CD8-positive, alpha-beta T cell (primary cell): ENCODE measurements at regions of chr1 and their contacts with region 1.

Region 1: GRCh38 chr1:46132529-46133180 is at the start of gene PIK3R3:
- DNase-seq: peak; percentile 54 to 96 (median 80)
- ATAC-seq: peak; percentile 85
- H3K4me3 ChIP-seq: peak within 1 kb of the TSS; percentile 75 to 91
- H3K4me3 Mint-ChIP-seq: peak within 1 kb of the TSS; percentile 97
- H3K27ac ChIP-seq: peak within 1 kb of the TSS; percentile 49 to 94
- H3K27ac Mint-ChIP-seq: peak within 1 kb of the TSS; percentile 93
- H3K4me1 ChIP-seq: peaks cover 7% of the 10 kb centered on the region
- H3K4me1 Mint-ChIP-seq: peaks cover 24% of the 10 kb centered on the region
- H3K27me3 ChIP-seq: peaks cover 0 to 6% of the 10 kb centered on the region in 2 experiments
- H3K27me3 Mint-ChIP-seq: peaks cover 39% of the 10 kb centered on the region
- CTCF ChIP-seq: no peak
- total RNA-seq, gene PIK3R3: 0.71 to 0.94 TPM

Region 2: GRCh38 chr1:45686317-45687013 is 446.2 kb before region 1 on chr1 and contains the start of gene GPBP1L1:
- CTCF ChIA-PET with region 1: no interaction called
- POLR2A ChIA-PET with region 1: no interaction called
- intact Hi-C with region 1: loop called in 1 of 2 experiments (anchors 5 kb)
- DNase-seq: peak; percentile 95 to 98 (median 98)
- ATAC-seq: peak; percentile 72
- H3K4me3 ChIP-seq: peak within 1 kb of the TSS; percentile 99
- H3K4me3 Mint-ChIP-seq: peak within 1 kb of the TSS; percentile 97
- H3K27ac ChIP-seq: peak within 1 kb of the TSS; percentile 84 to 92
- H3K27ac Mint-ChIP-seq: peak within 1 kb of the TSS; percentile 100
- H3K4me1 ChIP-seq: peaks cover 39% of the 10 kb centered on the region
- H3K4me1 Mint-ChIP-seq: peaks cover 59% of the 10 kb centered on the region
- H3K27me3 ChIP-seq: no peaks in the 10 kb centered on the region
- H3K27me3 Mint-ChIP-seq: no peaks in the 10 kb centered on the region
- CTCF ChIP-seq: no peak
- total RNA-seq, gene GPBP1L1: 125 to 128 TPM

Region 3: GRCh38 chr1:46065405-46065804 is 67.2 kb before region 1 on chr1:
- CTCF ChIA-PET with region 1: no interaction called
- POLR2A ChIA-PET with region 1: no interaction called
- intact Hi-C with region 1: loop called in 1 of 2 experiments (anchors 5 kb)
- DNase-seq: peak in 2 of 9 experiments; percentile 46 to 67
- ATAC-seq: peak; percentile 88
- H3K4me3 ChIP-seq: no peak overlapping the region
- H3K4me3 Mint-ChIP-seq: peak overlapping the region; percentile 69
- H3K27ac ChIP-seq: peak overlapping the region in 1 of 2 experiments; percentile 39
- H3K27ac Mint-ChIP-seq: peak overlapping the region; percentile 81
- H3K4me1 ChIP-seq: peaks cover 13% of the 10 kb centered on the region
- H3K4me1 Mint-ChIP-seq: peaks cover 19% of the 10 kb centered on the region
- H3K27me3 ChIP-seq: no peaks in the 10 kb centered on the region
- H3K27me3 Mint-ChIP-seq: no peaks in the 10 kb centered on the region
- CTCF ChIP-seq: no peak

Region 4: DNA sequence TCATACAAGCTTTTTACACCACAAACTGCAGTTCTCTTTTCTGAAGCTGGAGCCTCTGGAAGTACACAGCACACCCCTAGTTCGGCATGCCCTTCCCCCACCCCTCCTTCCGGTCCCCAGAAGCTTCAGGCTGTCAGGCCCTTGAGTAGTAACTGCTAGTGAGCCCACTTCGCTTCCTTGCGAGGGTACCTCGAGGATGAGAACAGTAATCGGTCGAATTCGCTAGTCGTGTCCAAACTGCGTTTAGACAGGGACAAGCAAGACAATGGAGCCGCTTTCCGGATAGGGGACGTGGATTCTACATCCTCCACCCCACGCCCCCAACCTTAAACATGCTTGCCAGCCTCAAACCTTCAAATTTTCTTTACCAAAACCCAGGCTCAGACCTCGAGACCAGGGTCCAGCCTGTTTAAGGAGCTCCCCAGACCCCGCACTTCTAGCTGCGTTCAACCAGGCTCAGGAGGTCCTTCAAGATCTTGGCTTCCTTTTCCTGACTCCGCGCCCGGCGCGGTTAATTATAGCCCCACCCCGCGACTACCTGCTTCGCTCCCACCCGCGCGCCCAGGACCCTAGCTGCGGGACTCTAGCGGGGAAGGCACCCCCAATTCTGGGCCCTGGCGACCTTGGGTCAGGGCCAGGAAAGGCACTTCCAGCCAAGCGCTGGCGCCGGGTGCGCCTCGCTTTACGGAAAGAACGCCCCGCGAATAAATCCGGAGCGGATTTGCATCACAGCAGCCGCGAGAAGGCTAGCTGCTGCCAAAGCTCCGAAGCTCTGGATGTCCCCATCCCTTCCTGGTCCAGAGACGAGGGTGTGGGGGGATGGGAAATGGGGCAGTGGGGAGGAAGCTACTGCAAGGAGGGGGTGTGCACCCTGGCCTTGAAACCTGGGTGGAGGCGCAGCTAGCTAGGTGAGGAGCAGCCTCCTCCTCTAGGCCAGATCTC is 34.1 kb after region 1 on chr1:
- CTCF ChIA-PET with region 1: no interaction called
- POLR2A ChIA-PET with region 1: interaction called, 9 read pairs
- intact Hi-C with region 1: loop called in 1 of 2 experiments (anchors 1 kb)
- DNase-seq: peak in 8 of 9 experiments; percentile 35 to 78 (median 50)
- ATAC-seq: peak; percentile 79
- H3K4me3 ChIP-seq: peak overlapping the region; percentile 57
- H3K4me3 Mint-ChIP-seq: peak overlapping the region; percentile 89
- H3K27ac ChIP-seq: peak overlapping the region; percentile 57 to 69
- H3K27ac Mint-ChIP-seq: peak overlapping the region; percentile 93
- H3K4me1 ChIP-seq: peaks cover 13% of the 10 kb centered on the region
- H3K4me1 Mint-ChIP-seq: peaks cover 16% of the 10 kb centered on the region
- H3K27me3 ChIP-seq: no peaks in the 10 kb centered on the region
- H3K27me3 Mint-ChIP-seq: peaks cover 2% of the 10 kb centered on the region
- CTCF ChIP-seq: no peak

Region 5: DNA sequence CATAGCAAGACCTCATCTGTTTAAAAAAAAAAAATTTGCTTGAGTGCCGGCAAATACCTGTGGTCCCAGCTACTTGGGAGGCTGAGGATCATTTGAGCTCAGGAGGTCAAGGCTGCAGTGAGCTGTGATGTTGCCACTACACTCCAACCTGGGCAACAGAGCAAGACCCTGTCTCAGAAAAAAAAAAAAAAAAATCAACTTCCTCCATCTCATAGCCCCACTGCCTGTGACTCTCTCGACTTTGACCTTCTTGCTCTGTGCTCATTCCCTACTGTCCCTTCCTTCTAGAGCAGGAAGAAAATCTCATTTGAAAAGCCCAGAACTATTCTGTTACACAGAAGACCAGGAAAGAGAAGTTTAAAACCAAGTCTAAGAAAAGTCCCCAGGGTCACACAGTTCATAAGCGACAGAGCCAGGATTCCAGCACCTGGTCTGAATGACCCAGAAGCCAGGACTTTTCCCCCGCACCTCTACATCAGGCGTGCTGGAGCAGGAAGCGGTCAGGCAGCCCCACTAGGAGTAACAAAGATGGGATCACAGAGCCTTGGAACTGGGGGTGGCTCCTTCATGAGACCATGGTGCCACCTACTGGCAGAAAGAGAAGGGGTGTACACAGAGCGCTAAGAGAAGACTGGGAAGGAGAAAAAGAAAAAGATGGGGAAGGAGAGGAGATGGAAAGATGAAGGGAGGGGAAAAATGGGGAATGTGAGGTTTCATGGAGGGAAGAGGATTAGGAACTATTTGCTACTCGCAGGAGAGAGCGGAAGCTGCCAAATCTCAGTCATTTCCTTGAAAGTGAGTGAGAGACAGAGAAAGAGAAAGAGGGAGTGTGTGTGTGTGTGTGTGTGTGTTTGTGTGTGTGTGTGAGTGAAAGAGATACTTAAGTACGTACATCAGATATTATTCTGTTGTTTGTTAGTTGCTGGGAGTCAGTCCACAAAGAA is 46.8 kb after region 1 on chr1:
- CTCF ChIA-PET with region 1: interaction called, 13 read pairs
- POLR2A ChIA-PET with region 1: no interaction called
- intact Hi-C with region 1: no loop called
- DNase-seq: peak; percentile 27 to 82 (median 68)
- ATAC-seq: peak; percentile 84
- H3K4me3 ChIP-seq: no peak overlapping the region
- H3K4me3 Mint-ChIP-seq: no peak overlapping the region
- H3K27ac ChIP-seq: no peak overlapping the region
- H3K27ac Mint-ChIP-seq: no peak overlapping the region
- H3K4me1 ChIP-seq: peaks cover 1% of the 10 kb centered on the region
- H3K4me1 Mint-ChIP-seq: peaks cover 5% of the 10 kb centered on the region
- H3K27me3 ChIP-seq: peaks cover 0 to 2% of the 10 kb centered on the region in 2 experiments
- H3K27me3 Mint-ChIP-seq: no peaks in the 10 kb centered on the region
- CTCF ChIP-seq: peak; percentile 94

Region 6: DNA sequence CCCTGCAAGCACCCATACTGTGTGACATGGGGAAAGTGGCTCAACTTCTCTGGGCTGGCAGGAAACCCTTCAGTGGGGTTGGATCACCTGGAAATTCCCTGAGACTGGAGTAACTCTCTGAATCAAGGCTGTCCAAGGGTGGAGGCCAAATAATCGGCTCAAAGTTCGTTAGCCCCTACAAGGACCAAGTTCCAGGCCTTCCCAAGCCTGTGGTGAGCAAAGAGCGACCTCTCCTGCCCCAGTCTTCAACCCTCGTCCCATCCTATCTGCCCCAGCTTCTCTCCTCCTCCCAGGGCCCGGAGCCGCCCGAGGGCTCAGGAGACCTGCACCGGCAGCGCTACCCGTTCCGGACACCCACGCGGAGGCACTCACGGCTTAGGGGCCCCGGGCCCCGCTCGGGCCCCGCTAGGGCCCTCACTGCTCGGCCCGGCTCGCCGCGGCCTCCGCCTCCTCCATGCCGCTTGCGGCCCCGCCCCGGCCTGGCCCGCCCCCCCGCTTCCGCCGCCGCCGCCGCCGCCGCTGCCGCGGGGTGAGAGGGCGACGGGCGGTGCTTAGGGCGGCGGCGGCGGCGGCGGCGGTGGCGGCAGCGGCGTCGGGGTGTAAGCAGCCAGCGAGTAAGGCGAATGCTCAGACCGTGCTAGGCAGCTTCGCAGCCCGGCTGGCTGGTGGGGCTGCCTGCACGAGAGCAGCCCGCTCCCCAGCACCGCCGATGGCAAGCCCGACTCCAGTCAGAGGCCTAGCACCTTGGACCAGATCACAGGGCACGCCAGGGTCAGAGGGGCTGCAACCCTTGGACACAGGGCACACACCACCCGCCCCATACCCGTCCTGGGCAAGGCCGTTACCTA is 65.5 kb after region 1 on chr1 and contains the start of gene POMGNT1:
- CTCF ChIA-PET with region 1: no interaction called
- POLR2A ChIA-PET with region 1: no interaction called
- intact Hi-C with region 1: loop called (anchors 1 to 2 kb)
- DNase-seq: peak; percentile 50 to 86 (median 72)
- ATAC-seq: peak; percentile 93
- H3K4me3 ChIP-seq: peak within 1 kb of the TSS; percentile 75 to 93
- H3K4me3 Mint-ChIP-seq: peak within 1 kb of the TSS; percentile 83
- H3K27ac ChIP-seq: peak within 1 kb of the TSS; percentile 58 to 59
- H3K27ac Mint-ChIP-seq: peak within 1 kb of the TSS; percentile 88
- H3K4me1 ChIP-seq: peaks cover 20% of the 10 kb centered on the region
- H3K4me1 Mint-ChIP-seq: peaks cover 32% of the 10 kb centered on the region
- H3K27me3 ChIP-seq: peaks cover 0 to 3% of the 10 kb centered on the region in 2 experiments
- H3K27me3 Mint-ChIP-seq: no peaks in the 10 kb centered on the region
- CTCF ChIP-seq: no peak
- total RNA-seq, gene POMGNT1: 20.3 to 23.4 TPM

Region 7: GRCh38 chr1:46211051-46211450 is 78.4 kb after region 1 on chr1:
- CTCF ChIA-PET with region 1: no interaction called
- POLR2A ChIA-PET with region 1: no interaction called
- intact Hi-C with region 1: no loop called
- DNase-seq: no peak
- ATAC-seq: no peak
- H3K4me3 ChIP-seq: no peak overlapping the region
- H3K4me3 Mint-ChIP-seq: no peak overlapping the region
- H3K27ac ChIP-seq: no peak overlapping the region
- H3K27ac Mint-ChIP-seq: no peak overlapping the region
- H3K4me1 ChIP-seq: no peaks in the 10 kb centered on the region
- H3K4me1 Mint-ChIP-seq: no peaks in the 10 kb centered on the region
- H3K27me3 ChIP-seq: peaks cover 0 to 2% of the 10 kb centered on the region in 2 experiments
- H3K27me3 Mint-ChIP-seq: no peaks in the 10 kb centered on the region
- CTCF ChIP-seq: no peak

Region 8: GRCh38 chr1:46446646-46447498 is 314.2 kb after region 1 on chr1:
- CTCF ChIA-PET with region 1: no interaction called
- POLR2A ChIA-PET with region 1: no interaction called
- intact Hi-C with region 1: no loop called
- DNase-seq: peak; percentile 50 to 82 (median 73)
- ATAC-seq: peak; percentile 58
- H3K4me3 ChIP-seq: no peak overlapping the region
- H3K4me3 Mint-ChIP-seq: peak overlapping the region; percentile 35
- H3K27ac ChIP-seq: no peak overlapping the region
- H3K27ac Mint-ChIP-seq: no peak overlapping the region
- H3K4me1 ChIP-seq: peaks cover 6% of the 10 kb centered on the region
- H3K4me1 Mint-ChIP-seq: peaks cover 24% of the 10 kb centered on the region
- H3K27me3 ChIP-seq: peaks cover 6 to 12% of the 10 kb centered on the region in 2 experiments
- H3K27me3 Mint-ChIP-seq: peaks cover 45% of the 10 kb centered on the region
- CTCF ChIP-seq: peak; percentile 75